Tibial artery (tissue), 4 donors: ENCODE measurements at regions of chr22 and their contacts with region 1.

Region 1: GRCh38 chr22:35739076-35739930 is 21.6 kb downstream of the APOL5 start:
- DNase-seq: peak; percentile 54 to 77
- H3K4me3 ChIP-seq: no peak overlapping the region
- H3K27ac ChIP-seq: peak overlapping the region; percentile 18 to 45
- H3K4me1 ChIP-seq: peaks cover 0 to 12% (median 0%) of the 10 kb centered on the region in 4 donors
- H3K27me3 ChIP-seq: no peaks in the 10 kb centered on the region
- CTCF ChIP-seq: peak; percentile 45 to 64

Region 2: GRCh38 chr22:35498026-35498800 is 241.1 kb before region 1 on chr22:
- intact Hi-C with region 1: no loop called
- DNase-seq: no peak
- H3K4me3 ChIP-seq: no peak overlapping the region
- H3K27ac ChIP-seq: no peak overlapping the region
- H3K4me1 ChIP-seq: no peaks in the 10 kb centered on the region
- H3K27me3 ChIP-seq: peaks cover 0 to 37% of the 10 kb centered on the region in 2 donors
- CTCF ChIP-seq: no peak

Region 3: DNA sequence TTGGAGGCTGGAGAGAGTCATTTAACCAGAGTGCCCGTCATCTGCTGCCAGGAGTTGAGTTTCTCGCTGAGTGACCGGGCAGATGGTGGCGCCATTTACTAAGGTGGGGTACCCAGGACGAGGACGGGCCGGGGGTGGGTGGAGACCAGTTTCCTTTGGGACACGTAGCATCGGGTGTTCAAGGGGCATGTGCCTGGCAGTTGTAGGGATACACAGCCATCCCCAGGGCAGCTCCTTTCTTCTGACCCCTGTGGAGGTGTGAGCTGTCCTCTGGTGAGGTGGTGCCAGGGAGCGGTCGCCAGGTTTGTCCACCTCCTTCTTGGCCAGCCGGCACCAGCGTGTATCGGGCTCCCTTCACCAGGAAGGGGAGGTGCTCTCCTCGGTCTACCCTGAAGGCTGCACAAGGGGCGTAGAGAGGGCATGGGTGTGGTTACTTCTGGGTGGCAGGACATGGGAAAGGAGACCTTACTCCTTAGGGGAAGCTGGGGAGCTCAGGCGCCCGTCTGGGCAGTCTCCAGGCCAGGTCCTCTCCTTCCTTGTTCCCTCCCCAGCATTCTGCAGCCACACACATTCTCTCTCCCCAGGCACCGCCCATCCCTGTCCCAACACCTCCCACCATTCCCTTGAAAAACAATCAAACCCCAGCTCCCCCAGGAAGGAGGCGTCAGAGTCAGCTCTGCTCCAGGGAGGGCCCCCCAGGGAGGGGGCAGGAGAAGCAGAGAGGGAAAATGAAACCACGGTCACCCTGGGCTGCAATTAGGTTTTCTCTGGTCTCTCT is 111.8 kb before region 1 on chr22:
- intact Hi-C with region 1: loop called (anchors 5 kb)
- DNase-seq: peak; percentile 87 to 91
- H3K4me3 ChIP-seq: peak overlapping the region; percentile 56 to 73
- H3K27ac ChIP-seq: peak overlapping the region; percentile 82 to 88
- H3K4me1 ChIP-seq: peaks cover 0 to 38% (median 25%) of the 10 kb centered on the region in 4 donors
- H3K27me3 ChIP-seq: no peaks in the 10 kb centered on the region
- CTCF ChIP-seq: peak; percentile 42 to 60

Region 4: DNA sequence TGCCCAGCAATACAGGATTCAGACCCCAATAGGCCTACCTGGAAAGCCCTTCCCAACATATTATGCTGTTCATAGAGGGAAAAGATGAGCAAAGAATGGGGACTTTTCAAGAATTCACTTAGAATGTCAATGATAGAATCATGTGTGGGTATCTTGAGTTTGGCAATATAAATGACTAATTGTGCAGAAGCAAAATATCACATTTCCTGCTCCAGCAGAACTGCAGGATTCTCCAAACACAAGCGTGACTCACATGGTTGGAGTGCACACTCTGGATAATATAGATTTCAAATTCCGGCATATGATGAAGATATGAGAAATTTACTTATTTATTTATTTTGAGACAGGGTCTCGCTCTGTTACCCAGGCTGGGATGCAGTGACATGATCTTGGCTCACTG is 34.2 kb before region 1 on chr22:
- intact Hi-C with region 1: no loop called
- DNase-seq: no peak
- H3K4me3 ChIP-seq: no peak overlapping the region
- H3K27ac ChIP-seq: no peak overlapping the region
- H3K4me1 ChIP-seq: no peaks in the 10 kb centered on the region
- H3K27me3 ChIP-seq: no peaks in the 10 kb centered on the region
- CTCF ChIP-seq: no peak

Region 5: GRCh38 chr22:36104988-36105387 is 365.7 kb after region 1 on chr22:
- intact Hi-C with region 1: no loop called
- DNase-seq: no peak
- H3K4me3 ChIP-seq: no peak overlapping the region
- H3K27ac ChIP-seq: no peak overlapping the region
- H3K4me1 ChIP-seq: peaks cover 0 to 2% (median under 1%) of the 10 kb centered on the region in 4 donors
- H3K27me3 ChIP-seq: no peaks in the 10 kb centered on the region
- CTCF ChIP-seq: no peak